B cell (primary cell): ENCODE measurements at regions of chr3 and their contacts with region 1.

Region 1: GRCh38 chr3:194472290-194472920 is 14.4 kb downstream of the ATP13A3 start:
- DNase-seq: peak; percentile 71
- ATAC-seq: peak; percentile 90
- H3K4me3 ChIP-seq: no peak overlapping the region
- H3K4me3 Mint-ChIP-seq: no peak overlapping the region
- H3K27ac ChIP-seq: no peak overlapping the region
- H3K27ac Mint-ChIP-seq: no peak overlapping the region
- H3K4me1 ChIP-seq: no peaks in the 10 kb centered on the region
- H3K4me1 Mint-ChIP-seq: peaks cover 9% of the 10 kb centered on the region
- H3K27me3 ChIP-seq: no peaks in the 10 kb centered on the region
- H3K27me3 Mint-ChIP-seq: no peaks in the 10 kb centered on the region
- CTCF ChIP-seq: peak; percentile 99

Region 2: GRCh38 chr3:194497821-194498598 is 25.6 kb after region 1 on chr3:
- CTCF ChIA-PET with region 1: interaction called, 10 read pairs
- POLR2A ChIA-PET with region 1: no interaction called
- intact Hi-C with region 1: no loop called
- DNase-seq: no peak
- ATAC-seq: peak; percentile 43
- H3K4me3 ChIP-seq: no peak overlapping the region
- H3K4me3 Mint-ChIP-seq: no peak overlapping the region
- H3K27ac ChIP-seq: no peak overlapping the region
- H3K27ac Mint-ChIP-seq: no peak overlapping the region
- H3K4me1 ChIP-seq: peaks cover 5 to 20% of the 10 kb centered on the region in 2 donors
- H3K4me1 Mint-ChIP-seq: peaks cover 18% of the 10 kb centered on the region
- H3K27me3 ChIP-seq: no peaks in the 10 kb centered on the region
- H3K27me3 Mint-ChIP-seq: no peaks in the 10 kb centered on the region
- CTCF ChIP-seq: no peak

Region 3: GRCh38 chr3:194521514-194522260 is 49.3 kb after region 1 on chr3:
- CTCF ChIA-PET with region 1: interaction called, 8 read pairs
- POLR2A ChIA-PET with region 1: no interaction called
- intact Hi-C with region 1: loop called (anchors 1 kb)
- DNase-seq: no peak
- ATAC-seq: no peak
- H3K4me3 ChIP-seq: no peak overlapping the region
- H3K4me3 Mint-ChIP-seq: no peak overlapping the region
- H3K27ac ChIP-seq: no peak overlapping the region
- H3K27ac Mint-ChIP-seq: no peak overlapping the region
- H3K4me1 ChIP-seq: no peaks in the 10 kb centered on the region
- H3K4me1 Mint-ChIP-seq: peaks cover 1% of the 10 kb centered on the region
- H3K27me3 ChIP-seq: no peaks in the 10 kb centered on the region
- H3K27me3 Mint-ChIP-seq: peaks cover 3% of the 10 kb centered on the region
- CTCF ChIP-seq: no peak

Region 4: DNA sequence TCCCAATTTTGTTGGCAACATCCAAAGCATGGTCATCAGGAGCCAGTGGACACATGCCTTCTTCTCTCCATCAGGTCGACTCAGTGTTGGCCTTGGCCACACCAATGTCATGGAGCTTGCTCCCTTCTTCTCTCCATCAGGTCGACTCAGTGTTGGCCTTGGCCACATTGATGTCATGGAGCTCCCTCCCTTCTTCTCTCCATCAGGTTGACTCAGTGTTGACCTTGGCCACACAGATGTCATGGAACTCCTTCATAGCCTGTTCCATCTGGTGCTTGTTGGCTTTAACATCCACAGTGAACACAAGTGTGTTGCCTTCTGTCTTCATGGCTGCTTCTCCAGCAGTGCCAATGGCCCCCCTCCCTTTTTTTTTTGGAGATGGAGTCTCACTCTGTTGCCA is 90.6 kb after region 1 on chr3:
- CTCF ChIA-PET with region 1: no interaction called
- POLR2A ChIA-PET with region 1: no interaction called
- intact Hi-C with region 1: no loop called
- DNase-seq: no peak
- ATAC-seq: no peak
- H3K4me3 ChIP-seq: no peak overlapping the region
- H3K4me3 Mint-ChIP-seq: no peak overlapping the region
- H3K27ac ChIP-seq: no peak overlapping the region
- H3K27ac Mint-ChIP-seq: no peak overlapping the region
- H3K4me1 ChIP-seq: no peaks in the 10 kb centered on the region
- H3K4me1 Mint-ChIP-seq: no peaks in the 10 kb centered on the region
- H3K27me3 ChIP-seq: peaks cover 0 to 10% (median 0%) of the 10 kb centered on the region in 4 experiments
- H3K27me3 Mint-ChIP-seq: peaks cover 27% of the 10 kb centered on the region
- CTCF ChIP-seq: no peak

Region 5: GRCh38 chr3:194583604-194584318 is 111.4 kb after region 1 on chr3:
- CTCF ChIA-PET with region 1: interaction called, 193 read pairs
- POLR2A ChIA-PET with region 1: no interaction called
- intact Hi-C with region 1: no loop called
- DNase-seq: peak; percentile 95
- ATAC-seq: peak; percentile 93
- H3K4me3 ChIP-seq: peak overlapping the region; percentile 81 to 98 (median 91)
- H3K4me3 Mint-ChIP-seq: peak overlapping the region; percentile 97
- H3K27ac ChIP-seq: peak overlapping the region; percentile 86 to 88
- H3K27ac Mint-ChIP-seq: peak overlapping the region; percentile 98
- H3K4me1 ChIP-seq: peaks cover 9% of the 10 kb centered on the region in 2 donors
- H3K4me1 Mint-ChIP-seq: peaks cover 21% of the 10 kb centered on the region
- H3K27me3 ChIP-seq: no peaks in the 10 kb centered on the region
- H3K27me3 Mint-ChIP-seq: no peaks in the 10 kb centered on the region
- CTCF ChIP-seq: no peak

Region 6: GRCh38 chr3:195238586-195239118 is 766.2 kb after region 1 on chr3:
- CTCF ChIA-PET with region 1: no interaction called
- POLR2A ChIA-PET with region 1: no interaction called
- intact Hi-C with region 1: no loop called
- DNase-seq: no peak
- ATAC-seq: no peak
- H3K4me3 ChIP-seq: no peak overlapping the region
- H3K4me3 Mint-ChIP-seq: no peak overlapping the region
- H3K27ac ChIP-seq: no peak overlapping the region
- H3K27ac Mint-ChIP-seq: no peak overlapping the region
- H3K4me1 ChIP-seq: no peaks in the 10 kb centered on the region
- H3K4me1 Mint-ChIP-seq: no peaks in the 10 kb centered on the region
- H3K27me3 ChIP-seq: peaks cover 0 to 5% (median 1%) of the 10 kb centered on the region in 4 experiments
- H3K27me3 Mint-ChIP-seq: no peaks in the 10 kb centered on the region
- CTCF ChIP-seq: no peak